ENCODE measurements at regions of chr16 and their contacts with region 1.

Region 1: DNA sequence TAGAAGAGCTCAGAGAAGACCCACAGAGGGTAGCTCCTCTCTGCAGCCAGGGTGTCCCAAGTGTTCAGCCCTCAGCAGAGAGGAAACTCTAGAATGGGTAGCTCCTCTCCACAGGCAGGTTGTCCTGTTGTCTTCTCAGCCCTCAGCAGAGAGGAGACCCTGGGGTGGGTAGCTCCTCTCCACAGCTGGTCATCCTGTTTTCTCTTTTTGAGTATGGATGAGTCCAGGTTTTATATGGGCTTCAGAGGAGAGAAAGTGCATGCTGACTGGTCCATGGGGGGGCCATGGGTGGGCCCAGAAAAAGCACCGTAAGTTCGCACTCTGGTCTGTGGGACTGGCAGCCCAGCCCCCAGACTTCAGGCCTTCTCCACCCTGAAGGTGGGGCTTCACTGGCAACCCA is 48.4 kb downstream of the ESRP2 start:
- DNase-seq: no peak
- H3K4me3 ChIP-seq: no peak overlapping the region
- H3K27ac ChIP-seq: no peak overlapping the region
- H3K4me1 ChIP-seq: no peaks in the 10 kb centered on the region
- H3K27me3 ChIP-seq: no peaks in the 10 kb centered on the region
- CTCF ChIP-seq: no peak

Region 2: GRCh38 chr16:68128577-68129305 is 58.8 kb before region 1 on chr16:
- CTCF ChIA-PET with region 1: interaction called, 14 read pairs
- POLR2A ChIA-PET with region 1: no interaction called
- intact Hi-C with region 1: no loop called
- DNase-seq: peak; percentile 12
- H3K4me3 ChIP-seq: no peak overlapping the region
- H3K27ac ChIP-seq: peak overlapping the region; percentile 25
- H3K4me1 ChIP-seq: no peaks in the 10 kb centered on the region
- H3K27me3 ChIP-seq: no peaks in the 10 kb centered on the region
- CTCF ChIP-seq: no peak